Mammary epithelial cell (primary cell): ENCODE measurements at regions of chr1 and their contacts with region 1.

Region 1: GRCh38 chr1:110780600-110781484 is 92.1 kb upstream of the CD53 start:
- DNase-seq: peak; percentile 67
- H3K4me3 ChIP-seq: no peak overlapping the region
- H3K27ac ChIP-seq: no peak overlapping the region
- H3K4me1 ChIP-seq: peaks cover 15% of the 10 kb centered on the region
- H3K27me3 ChIP-seq: no peaks in the 10 kb centered on the region
- CTCF ChIP-seq: peak; percentile 85 to 87

Region 2: GRCh38 chr1:110412576-110412975 is 368.3 kb before region 1 on chr1:
- CTCF ChIA-PET with region 1: no interaction called
- dilution Hi-C with region 1: no loop called
- in situ Hi-C with region 1: no loop called
- intact Hi-C with region 1: loop called (anchors 5 kb)
- DNase-seq: peak; percentile 58
- H3K4me3 ChIP-seq: no peak overlapping the region
- H3K27ac ChIP-seq: no peak overlapping the region
- H3K4me1 ChIP-seq: no peaks in the 10 kb centered on the region
- H3K27me3 ChIP-seq: no peaks in the 10 kb centered on the region
- CTCF ChIP-seq: peak; percentile 63 to 89

Region 3: GRCh38 chr1:110554871-110555801 is 225.7 kb before region 1 on chr1:
- CTCF ChIA-PET with region 1: no interaction called
- dilution Hi-C with region 1: no loop called
- in situ Hi-C with region 1: no loop called
- intact Hi-C with region 1: loop called (anchors 1 kb)
- DNase-seq: no peak
- H3K4me3 ChIP-seq: peak overlapping the region in 2 of 3 experiments; percentile 28 to 36
- H3K27ac ChIP-seq: no peak overlapping the region
- H3K4me1 ChIP-seq: peaks cover 10% of the 10 kb centered on the region
- H3K27me3 ChIP-seq: peaks cover 13% of the 10 kb centered on the region
- CTCF ChIP-seq: peak; percentile 27 to 63

Region 4: DNA sequence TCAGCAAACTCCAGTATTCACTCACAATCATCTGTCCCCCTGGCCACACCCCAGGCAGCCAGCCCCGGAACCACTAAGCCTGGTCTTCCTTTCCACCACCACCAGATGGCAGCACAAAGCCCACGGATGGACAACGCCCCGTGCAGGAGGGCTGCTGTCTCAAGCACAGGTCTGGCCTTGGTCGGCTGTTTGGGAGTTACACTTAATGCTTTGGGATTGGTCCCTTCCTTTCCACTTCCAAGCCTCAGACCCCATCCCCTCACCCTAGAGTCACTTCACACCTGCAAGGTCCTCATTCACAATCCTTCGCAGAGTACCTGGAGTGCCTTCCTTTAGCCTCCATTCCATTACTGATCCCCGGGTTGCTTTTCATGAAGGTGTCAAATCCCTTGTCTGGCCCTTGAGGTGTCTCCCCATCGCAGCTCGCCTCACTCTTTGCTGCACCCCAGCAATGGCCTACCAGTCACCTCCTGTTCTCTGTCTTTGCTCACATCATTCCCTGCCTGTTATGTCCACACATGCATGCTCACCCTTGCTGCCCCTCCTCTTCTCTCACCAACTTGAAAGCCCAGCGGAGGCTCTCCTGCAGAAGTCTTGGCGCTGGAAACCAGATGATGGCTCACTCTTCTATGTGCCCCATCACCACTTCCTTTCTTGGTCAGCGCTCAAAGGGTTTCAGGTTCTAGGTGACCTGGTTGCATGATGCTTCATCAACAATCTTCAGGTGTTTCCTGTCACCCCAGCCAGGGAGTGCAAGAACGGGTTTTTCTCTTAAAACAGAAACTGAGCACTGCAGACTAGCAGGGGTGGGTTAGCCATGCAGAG is 149.8 kb before region 1 on chr1:
- CTCF ChIA-PET with region 1: no interaction called
- dilution Hi-C with region 1: no loop called
- in situ Hi-C with region 1: loop called in 1 of 2 experiments (anchors 5 kb)
- intact Hi-C with region 1: loop called (anchors 1 kb)
- DNase-seq: peak; percentile 58
- H3K4me3 ChIP-seq: no peak overlapping the region
- H3K27ac ChIP-seq: no peak overlapping the region
- H3K4me1 ChIP-seq: no peaks in the 10 kb centered on the region
- H3K27me3 ChIP-seq: no peaks in the 10 kb centered on the region
- CTCF ChIP-seq: peak; percentile 74 to 90

Region 5: DNA sequence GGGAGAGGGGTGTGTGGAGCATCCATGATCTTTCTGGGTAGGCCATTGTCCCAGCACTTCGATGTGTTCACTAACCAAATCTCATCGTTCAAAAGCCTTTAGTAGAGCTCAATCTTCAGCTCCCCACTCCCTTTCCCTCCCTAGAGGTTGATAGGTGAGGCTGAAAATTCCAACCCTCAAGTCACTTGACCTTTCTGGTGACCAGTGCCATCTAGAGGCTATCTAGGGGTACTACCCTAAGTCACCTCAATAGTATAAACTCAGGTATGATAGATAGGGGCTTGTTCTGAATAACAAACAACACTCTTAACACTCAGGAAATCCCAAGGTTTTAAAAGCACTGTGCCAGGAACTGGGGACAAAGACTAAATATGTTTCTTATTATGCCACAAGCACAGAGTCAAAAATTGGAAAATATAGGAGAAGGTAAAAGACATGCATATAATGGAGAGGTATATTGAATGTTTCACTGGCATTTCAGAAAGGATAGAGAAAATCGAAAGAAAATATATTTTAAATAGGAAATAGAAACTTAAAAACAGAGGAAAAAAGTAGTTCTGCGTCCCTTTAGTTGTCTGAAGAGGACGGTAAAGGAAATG is 49.2 kb after region 1 on chr1:
- CTCF ChIA-PET with region 1: no interaction called
- dilution Hi-C with region 1: no loop called
- in situ Hi-C with region 1: no loop called
- intact Hi-C with region 1: loop called (anchors 2 kb)
- DNase-seq: peak; percentile 29
- H3K4me3 ChIP-seq: no peak overlapping the region
- H3K27ac ChIP-seq: no peak overlapping the region
- H3K4me1 ChIP-seq: no peaks in the 10 kb centered on the region
- H3K27me3 ChIP-seq: no peaks in the 10 kb centered on the region
- CTCF ChIP-seq: peak; percentile 82 to 86

Region 6: GRCh38 chr1:111222308-111223125 is 441.7 kb after region 1 on chr1:
- CTCF ChIA-PET with region 1: no interaction called
- dilution Hi-C with region 1: no loop called
- in situ Hi-C with region 1: no loop called
- intact Hi-C with region 1: loop called (anchors 2 kb)
- DNase-seq: peak; percentile 77
- H3K4me3 ChIP-seq: peak overlapping the region in 1 of 3 experiments; percentile 6
- H3K27ac ChIP-seq: no peak overlapping the region
- H3K4me1 ChIP-seq: peaks cover 26% of the 10 kb centered on the region
- H3K27me3 ChIP-seq: no peaks in the 10 kb centered on the region
- CTCF ChIP-seq: peak; percentile 79 to 99